ENCODE measurements at regions of chr1 and their contacts with region 1.

Region 1: GRCh38 chr1:113949007-113949406 is 19.9 kb downstream of the HIPK1 start:
- DNase-seq: peak in 2 of 14 experiments; percentile 58 to 63
- ATAC-seq: no peak
- H3K4me3 ChIP-seq: no peak overlapping the region
- H3K4me3 Mint-ChIP-seq: peak overlapping the region; percentile 51
- H3K27ac ChIP-seq: peak overlapping the region; percentile 60 to 66
- H3K27ac Mint-ChIP-seq: peak overlapping the region; percentile 89
- H3K4me1 ChIP-seq: peaks cover 50% of the 10 kb centered on the region
- H3K4me1 Mint-ChIP-seq: peaks cover 92% of the 10 kb centered on the region
- H3K27me3 ChIP-seq: no peaks in the 10 kb centered on the region
- H3K27me3 Mint-ChIP-seq: no peaks in the 10 kb centered on the region
- CTCF ChIP-seq: peak; percentile 43

Region 2: GRCh38 chr1:113963281-113963906 is 14.4 kb after region 1 on chr1:
- CTCF ChIA-PET with region 1: interaction called, 3 read pairs
- POLR2A ChIA-PET with region 1: interaction called, 11 read pairs
- intact Hi-C with region 1: loop called (anchors 1 to 2 kb)
- DNase-seq: peak in 2 of 14 experiments; percentile 36 to 39
- ATAC-seq: peak; percentile 56
- H3K4me3 ChIP-seq: no peak overlapping the region
- H3K4me3 Mint-ChIP-seq: no peak overlapping the region
- H3K27ac ChIP-seq: no peak overlapping the region
- H3K27ac Mint-ChIP-seq: peak overlapping the region; percentile 65
- H3K4me1 ChIP-seq: no peaks in the 10 kb centered on the region
- H3K4me1 Mint-ChIP-seq: peaks cover 26% of the 10 kb centered on the region
- H3K27me3 ChIP-seq: no peaks in the 10 kb centered on the region
- H3K27me3 Mint-ChIP-seq: no peaks in the 10 kb centered on the region
- CTCF ChIP-seq: no peak

Measured in CD4-positive, alpha-beta T cell (primary cell).